Activated T-helper 1 cell treated with anti-CD3 and anti-CD28 coated beads, Interleukin-12 subunit alpha, Interleukin-12 subunit beta, Interleukin-2, Interleukin-4 antibody, amounts not matched to agents 30 ng/mL and 10 ng/mL and 1 ng/mL, durations not matched to agents 14 hours and 24 hours and 36 hours (primary cell): ENCODE measurements at regions of chr12 and their contacts with region 1.

Region 1: GRCh38 chr12:54368709-54369583 is 4.7 kb upstream of the GPR84 start:
- DNase-seq: peak; percentile 76
- H3K4me3 Mint-ChIP-seq: peak overlapping the region; percentile 65
- H3K27ac Mint-ChIP-seq: peak overlapping the region; percentile 61
- H3K4me1 Mint-ChIP-seq: peaks cover 43% of the 10 kb centered on the region
- H3K27me3 Mint-ChIP-seq: peaks cover 12% of the 10 kb centered on the region

Region 2: DNA sequence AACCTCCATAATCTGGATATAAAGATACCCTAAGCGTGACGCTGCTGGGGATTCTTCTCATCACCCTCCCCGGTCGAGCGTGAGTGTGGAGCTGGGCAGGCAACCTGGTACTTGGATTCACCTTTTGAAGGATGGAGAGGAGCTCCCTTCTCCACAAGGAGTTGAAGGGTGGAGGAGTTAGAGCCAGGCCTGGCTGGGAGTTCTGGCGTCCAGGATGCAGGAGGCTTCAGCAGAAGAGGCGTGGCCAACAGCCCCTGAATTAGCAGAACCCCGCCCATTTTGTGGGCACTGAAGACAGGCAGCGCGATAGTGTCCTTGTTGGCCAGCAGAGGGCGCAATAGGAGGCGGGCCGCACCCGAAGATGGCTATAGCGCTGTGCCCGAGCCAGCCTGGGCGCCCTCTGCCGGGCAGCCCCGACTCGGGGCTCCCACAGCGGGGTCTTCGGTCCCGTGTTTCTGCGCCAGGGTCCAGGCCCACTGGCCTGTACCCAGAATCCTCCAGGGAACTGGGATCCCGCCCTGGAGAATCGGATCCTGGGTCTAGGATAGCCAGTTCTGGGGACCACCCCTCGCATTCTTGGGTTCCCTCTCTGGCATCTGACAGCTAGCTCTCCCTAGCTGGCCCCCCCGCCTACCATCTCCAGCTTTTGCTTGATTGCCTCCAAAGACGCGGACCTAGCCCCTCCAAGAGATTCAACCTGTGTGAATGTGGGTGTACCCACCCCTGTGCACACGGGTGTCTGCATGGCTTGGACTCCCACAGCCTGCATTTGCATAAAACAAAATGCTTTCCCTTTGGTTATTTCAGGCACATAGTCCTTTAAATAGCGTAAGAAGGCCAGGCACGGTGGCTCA is 154.2 kb before region 1 on chr12:
- intact Hi-C with region 1: loop called (anchors 1 kb)
- DNase-seq: peak; percentile 86
- H3K4me3 Mint-ChIP-seq: peak overlapping the region; percentile 72
- H3K27ac Mint-ChIP-seq: no peak overlapping the region
- H3K4me1 Mint-ChIP-seq: peaks cover 19% of the 10 kb centered on the region
- H3K27me3 Mint-ChIP-seq: peaks cover 13% of the 10 kb centered on the region

Region 3: GRCh38 chr12:54251667-54252284 is 117.2 kb before region 1 on chr12:
- intact Hi-C with region 1: loop called (anchors 1 kb)
- DNase-seq: no peak
- H3K4me3 Mint-ChIP-seq: no peak overlapping the region
- H3K27ac Mint-ChIP-seq: no peak overlapping the region
- H3K4me1 Mint-ChIP-seq: peaks cover 6% of the 10 kb centered on the region
- H3K27me3 Mint-ChIP-seq: no peaks in the 10 kb centered on the region

Region 4: DNA sequence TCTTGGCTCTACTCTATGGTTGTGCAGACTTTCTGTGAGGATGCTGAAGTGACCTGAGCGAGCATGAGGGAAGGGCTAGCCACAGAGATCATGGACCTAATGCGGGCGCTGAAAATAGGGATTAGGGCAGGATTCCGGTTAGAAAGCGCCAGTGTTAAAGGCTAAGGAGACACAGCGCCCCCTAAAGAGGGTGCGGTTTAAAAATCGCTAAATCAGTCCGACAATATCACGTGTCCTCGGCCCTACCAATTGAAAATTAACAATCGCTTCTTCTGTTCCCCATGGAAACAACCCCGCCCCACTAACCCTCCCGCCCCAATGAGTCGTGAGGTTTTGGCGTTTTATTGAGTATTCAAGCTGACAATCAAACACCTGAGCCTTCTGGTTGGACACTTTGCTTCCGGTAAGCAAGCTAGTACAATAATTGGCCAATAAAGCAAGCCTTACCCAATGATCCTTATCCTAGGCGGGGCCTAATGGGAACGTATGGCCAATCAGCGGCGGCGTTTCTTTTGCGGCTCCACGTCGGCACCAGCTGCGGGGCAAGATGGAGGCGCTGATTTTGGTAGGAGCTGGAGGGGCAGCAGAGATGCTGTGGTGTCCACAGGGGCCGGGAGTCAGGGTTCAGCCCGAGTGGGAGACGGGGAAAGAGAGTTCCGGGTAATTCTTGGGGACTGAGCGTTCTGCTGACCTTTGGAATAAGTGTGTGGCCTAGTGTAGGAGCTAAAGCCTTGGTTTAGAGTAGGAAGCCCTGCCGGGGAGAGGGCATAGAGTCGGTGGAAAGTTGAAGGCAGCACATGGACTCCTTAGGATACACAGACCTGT is 44.1 kb before region 1 on chr12 and contains the start of gene COPZ1:
- intact Hi-C with region 1: loop called (anchors 1 kb)
- DNase-seq: peak; percentile 91
- H3K4me3 Mint-ChIP-seq: peak within 1 kb of the TSS; percentile 99
- H3K27ac Mint-ChIP-seq: peak within 1 kb of the TSS; percentile 86
- H3K4me1 Mint-ChIP-seq: peaks cover 33% of the 10 kb centered on the region
- H3K27me3 Mint-ChIP-seq: peaks cover 5% of the 10 kb centered on the region
- total RNA-seq, gene COPZ1: 115 and 123 TPM in 2 replicates

Region 5: DNA sequence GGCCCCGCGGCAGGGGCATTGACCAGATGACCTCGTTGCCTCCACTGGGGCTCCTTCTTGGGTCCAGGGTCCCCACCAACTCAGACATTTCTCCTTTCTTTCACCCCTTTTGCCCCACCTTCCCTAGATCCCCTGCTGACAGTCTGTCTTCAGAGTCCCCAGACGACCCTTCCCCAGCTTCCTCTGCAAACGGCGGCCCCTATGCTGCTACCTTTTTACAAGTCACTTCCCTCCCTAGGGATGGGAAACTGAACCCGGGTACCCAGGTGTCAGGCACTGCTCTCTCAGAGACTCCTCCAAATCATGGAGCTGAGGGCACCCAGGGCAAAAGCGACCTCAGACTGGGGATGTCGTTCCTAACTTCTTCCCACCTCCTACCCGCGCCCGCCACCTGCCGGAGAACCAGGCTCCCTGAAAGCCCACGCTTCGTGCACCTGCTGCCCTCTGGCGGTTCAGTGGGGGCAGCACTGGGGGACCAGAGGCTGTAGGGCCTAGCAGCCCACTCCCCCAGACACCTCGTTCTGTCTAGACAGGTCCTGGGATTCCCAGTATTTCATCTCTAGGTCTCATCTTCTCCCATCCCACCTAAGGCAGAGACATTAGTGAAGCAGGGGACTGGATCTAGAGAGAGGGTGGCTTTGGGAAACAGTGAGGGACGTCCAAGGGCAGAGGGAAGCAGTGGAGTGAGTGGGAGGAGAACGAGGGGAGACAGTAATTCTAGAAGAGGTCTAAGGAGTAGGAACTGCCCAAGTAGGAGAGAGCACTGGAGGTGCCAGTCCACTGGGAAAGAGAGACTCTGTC is 10.7 kb after region 1 on chr12:
- intact Hi-C with region 1: loop called (anchors 1 kb)
- DNase-seq: peak; percentile 84
- H3K4me3 Mint-ChIP-seq: peak overlapping the region; percentile 70
- H3K27ac Mint-ChIP-seq: no peak overlapping the region
- H3K4me1 Mint-ChIP-seq: peaks cover 13% of the 10 kb centered on the region
- H3K27me3 Mint-ChIP-seq: peaks cover 6% of the 10 kb centered on the region